ENCODE measurements at regions of chr21 and their contacts with region 1.

Region 1: DNA sequence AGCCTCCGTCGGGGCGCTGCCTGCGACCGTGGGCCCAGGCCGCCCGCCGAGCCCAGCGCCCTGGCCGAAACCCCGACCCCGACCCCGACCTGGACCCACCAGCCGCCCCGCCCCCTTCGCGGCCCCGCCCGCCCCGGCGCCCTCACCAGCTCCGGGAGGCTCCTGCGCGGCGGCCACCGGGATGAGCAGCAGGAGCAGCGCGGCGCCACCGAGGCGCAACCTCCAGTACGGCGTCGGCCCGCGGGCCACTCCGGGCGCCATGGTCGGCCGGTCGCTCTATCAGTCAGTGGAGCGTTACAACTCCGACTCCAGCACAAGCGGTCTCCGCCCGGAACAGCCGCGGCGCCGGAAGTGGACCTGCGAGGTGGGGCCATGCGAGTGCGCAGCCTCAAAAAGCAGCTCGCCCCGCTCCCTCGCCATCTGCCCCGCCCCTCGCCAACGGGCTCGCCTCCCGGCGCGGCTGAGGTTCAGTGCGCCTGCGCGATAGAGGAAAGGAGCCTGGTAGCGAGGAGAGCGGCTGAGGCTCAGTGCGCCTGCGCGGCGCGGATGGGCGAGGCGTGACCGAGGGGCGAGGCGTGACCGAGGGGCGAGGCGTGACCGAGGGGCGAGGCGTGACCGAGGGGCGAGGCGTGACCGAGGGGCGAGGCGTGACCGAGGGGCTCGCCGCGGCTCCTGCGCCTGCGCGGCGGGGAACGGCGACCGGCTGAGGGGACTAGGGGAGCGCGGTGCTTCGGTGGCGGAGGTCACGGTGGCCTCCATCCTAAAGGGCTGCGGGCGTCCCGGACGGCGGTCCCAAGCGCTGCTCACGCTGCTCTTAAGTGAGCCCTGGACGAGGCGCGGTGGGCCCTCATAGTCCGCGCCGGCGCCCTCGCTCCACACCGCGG is at the start of gene PTTG1IP:
- DNase-seq: peak; percentile 98 to 99 (median 98)
- H3K4me3 ChIP-seq: peak within 1 kb of the TSS; percentile 75 to 99 (median 80)
- H3K27ac ChIP-seq: peak within 1 kb of the TSS; percentile 54 to 91 (median 81)
- H3K4me1 ChIP-seq: peaks cover 46 to 58% of the 10 kb centered on the region in 2 donors
- H3K27me3 ChIP-seq: no peaks in the 10 kb centered on the region
- CTCF ChIP-seq: no peak
- POLR2A ChIP-seq: peak; percentile 72 to 95
- total RNA-seq, gene PTTG1IP: 114 to 467 (median 222) TPM

Region 2: GRCh38 chr21:44817506-44817880 is 56.1 kb before region 1 on chr21:
- intact Hi-C with region 1: loop called in 1 of 2 experiments (anchors 5 kb)
- DNase-seq: peak; percentile 90 to 95 (median 91)
- H3K4me3 ChIP-seq: peak overlapping the region in 2 of 4 donors; percentile 53 to 83
- H3K27ac ChIP-seq: peak overlapping the region in 2 of 5 donors; percentile 80 to 95
- H3K4me1 ChIP-seq: peaks cover 8 to 14% of the 10 kb centered on the region in 2 donors
- H3K27me3 ChIP-seq: no peaks in the 10 kb centered on the region
- CTCF ChIP-seq: no peak
- POLR2A ChIP-seq: no peak

Region 3: GRCh38 chr21:45011911-45012660 is 138.5 kb after region 1 on chr21:
- intact Hi-C with region 1: no loop called
- DNase-seq: peak in 3 of 7 donors; percentile 8 to 12 (median 11)
- H3K4me3 ChIP-seq: no peak overlapping the region
- H3K27ac ChIP-seq: no peak overlapping the region
- H3K4me1 ChIP-seq: no peaks in the 10 kb centered on the region
- H3K27me3 ChIP-seq: no peaks in the 10 kb centered on the region
- CTCF ChIP-seq: no peak
- POLR2A ChIP-seq: no peak

Measured in adrenal gland (tissue), 19 donors.